AG04450 (cell line): ENCODE measurements at regions of chrX and their contacts with region 1.

Region 1: GRCh38 chrX:132226169-132226568 is 6.9 kb upstream of the RAP2C start:
- DNase-seq: no peak
- H3K4me3 ChIP-seq: no peak overlapping the region
- H3K27ac ChIP-seq: no peak overlapping the region
- H3K27me3 ChIP-seq: no peaks in the 10 kb centered on the region
- CTCF ChIP-seq: peak; percentile 50

Region 2: GRCh38 chrX:132615391-132616131 is 389.4 kb after region 1 on chrX:
- CTCF ChIA-PET with region 1: interaction called, 12 read pairs
- POLR2A ChIA-PET with region 1: no interaction called
- DNase-seq: no peak
- H3K4me3 ChIP-seq: no peak overlapping the region
- H3K27ac ChIP-seq: no peak overlapping the region
- H3K27me3 ChIP-seq: no peaks in the 10 kb centered on the region
- CTCF ChIP-seq: peak; percentile 33

Region 3: GRCh38 chrX:132631579-132632232 is 405.5 kb after region 1 on chrX:
- CTCF ChIA-PET with region 1: interaction called, 15 read pairs
- POLR2A ChIA-PET with region 1: no interaction called
- DNase-seq: no peak
- H3K4me3 ChIP-seq: no peak overlapping the region
- H3K27ac ChIP-seq: no peak overlapping the region
- H3K27me3 ChIP-seq: no peaks in the 10 kb centered on the region
- CTCF ChIP-seq: peak; percentile 51